ENCODE measurements at regions of chr1 and their contacts with region 1.

Region 1: GRCh38 chr1:156571949-156572662 is at the start of gene IQGAP3:
- DNase-seq: peak; percentile 47 to 81 (median 62)
- H3K4me3 ChIP-seq: peak within 1 kb of the TSS; percentile 26
- H3K4me3 Mint-ChIP-seq: peak within 1 kb of the TSS in 6 of 7 donors; percentile 61 to 88 (median 74)
- H3K27ac ChIP-seq: peak within 1 kb of the TSS; percentile 55
- H3K27ac Mint-ChIP-seq: peak within 1 kb of the TSS in 5 of 8 donors; percentile 26 to 59 (median 37)
- H3K4me1 ChIP-seq: peaks cover 6% of the 10 kb centered on the region
- H3K4me1 Mint-ChIP-seq: peaks cover 8 to 15% (median 13%) of the 10 kb centered on the region in 3 donors
- H3K27me3 ChIP-seq: peaks cover 13% of the 10 kb centered on the region
- H3K27me3 Mint-ChIP-seq: peaks cover 17 to 42% of the 10 kb centered on the region in 2 donors
- total RNA-seq, gene IQGAP3: 4.4 to 4.7 TPM

Region 2: DNA sequence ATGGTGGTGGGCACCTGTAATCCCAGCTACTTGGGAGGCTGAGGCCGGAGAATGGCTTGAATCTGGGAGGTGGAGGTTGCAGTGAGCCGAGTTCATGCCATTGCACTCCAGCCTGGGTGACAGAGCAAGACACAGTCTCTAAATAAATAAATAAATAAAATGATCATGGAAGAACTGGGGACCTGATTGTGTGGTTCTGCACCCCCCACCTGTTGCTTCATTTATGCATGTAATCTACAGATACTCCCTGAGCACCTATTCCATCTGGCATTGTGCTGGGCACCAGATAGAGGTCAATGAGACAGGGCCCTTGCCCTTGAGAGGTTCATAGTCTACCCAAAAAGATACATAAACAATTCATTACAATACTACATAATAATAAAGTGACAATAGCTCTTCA is 214.1 kb before region 1 on chr1:
- CTCF ChIA-PET with region 1: no interaction called
- POLR2A ChIA-PET with region 1: interaction called, 11 read pairs
- DNase-seq: no peak
- H3K4me3 ChIP-seq: no peak overlapping the region
- H3K4me3 Mint-ChIP-seq: no peak overlapping the region
- H3K27ac ChIP-seq: no peak overlapping the region
- H3K27ac Mint-ChIP-seq: no peak overlapping the region
- H3K4me1 ChIP-seq: peaks cover 7% of the 10 kb centered on the region
- H3K4me1 Mint-ChIP-seq: peaks cover 0 to 8% (median 6%) of the 10 kb centered on the region in 3 donors
- H3K27me3 ChIP-seq: peaks cover 10% of the 10 kb centered on the region
- H3K27me3 Mint-ChIP-seq: peaks cover 3 to 55% of the 10 kb centered on the region in 2 donors

Region 3: GRCh38 chr1:156560585-156561183 is 11.4 kb before region 1 on chr1:
- CTCF ChIA-PET with region 1: no interaction called
- POLR2A ChIA-PET with region 1: no interaction called
- DNase-seq: no peak
- H3K4me3 ChIP-seq: no peak overlapping the region
- H3K4me3 Mint-ChIP-seq: no peak overlapping the region
- H3K27ac ChIP-seq: no peak overlapping the region
- H3K27ac Mint-ChIP-seq: peak overlapping the region in 1 of 8 donors; percentile 52
- H3K4me1 ChIP-seq: no peaks in the 10 kb centered on the region
- H3K4me1 Mint-ChIP-seq: no peaks in the 10 kb centered on the region
- H3K27me3 ChIP-seq: no peaks in the 10 kb centered on the region
- H3K27me3 Mint-ChIP-seq: no peaks in the 10 kb centered on the region